ENCODE measurements at regions of chr9 and their contacts with region 1.

Region 1: GRCh38 chr9:10447036-10447435 is 165.8 kb downstream of the PTPRD start:
- DNase-seq: no peak
- H3K4me3 ChIP-seq: no peak overlapping the region
- H3K27ac ChIP-seq: no peak overlapping the region
- H3K4me1 ChIP-seq: no peaks in the 10 kb centered on the region
- H3K27me3 ChIP-seq: no peaks in the 10 kb centered on the region
- CTCF ChIP-seq: no peak

Region 2: GRCh38 chr9:8627976-8628679 is 1818.9 kb before region 1 on chr9:
- intact Hi-C with region 1: loop called (anchors 5 kb)
- DNase-seq: no peak
- H3K4me3 ChIP-seq: no peak overlapping the region
- H3K27ac ChIP-seq: no peak overlapping the region
- H3K4me1 ChIP-seq: peaks cover 0 to 34% (median 6%) of the 10 kb centered on the region in 4 donors
- H3K27me3 ChIP-seq: no peaks in the 10 kb centered on the region
- CTCF ChIP-seq: no peak

Region 3: DNA sequence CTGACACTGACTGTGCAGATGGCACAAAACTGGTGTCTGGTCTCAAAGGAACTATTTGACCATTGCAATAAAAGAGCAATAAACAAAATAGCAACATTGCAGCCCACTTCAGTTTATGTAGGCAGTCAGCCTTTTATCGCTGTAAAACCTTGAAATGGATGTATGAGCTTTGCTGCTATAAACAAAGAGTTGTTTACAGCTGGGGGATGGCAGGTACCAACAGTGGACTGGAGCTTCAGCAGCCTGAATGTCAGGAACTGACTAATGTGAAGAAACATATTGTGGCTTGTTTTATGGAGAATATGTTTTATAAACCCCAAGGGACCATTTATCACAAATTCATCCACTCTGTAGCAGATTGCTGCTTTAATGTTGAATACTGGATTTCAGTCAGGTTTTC is 87.8 kb after region 1 on chr9:
- intact Hi-C with region 1: no loop called
- DNase-seq: no peak
- H3K4me3 ChIP-seq: no peak overlapping the region
- H3K27ac ChIP-seq: no peak overlapping the region
- H3K4me1 ChIP-seq: no peaks in the 10 kb centered on the region
- H3K27me3 ChIP-seq: no peaks in the 10 kb centered on the region
- CTCF ChIP-seq: no peak